AG04450 (cell line): ENCODE measurements at regions of chr7 and their contacts with region 1.

Region 1: GRCh38 chr7:44072364-44073231 is 7.2 kb upstream of the PGAM2 start:
- DNase-seq: peak; percentile 61
- H3K4me3 ChIP-seq: no peak overlapping the region
- H3K27ac ChIP-seq: peak overlapping the region; percentile 31
- H3K27me3 ChIP-seq: no peaks in the 10 kb centered on the region
- CTCF ChIP-seq: peak; percentile 95

Region 2: GRCh38 chr7:44131173-44132029 is 58.8 kb after region 1 on chr7:
- CTCF ChIA-PET with region 1: interaction called, 3 read pairs
- POLR2A ChIA-PET with region 1: interaction called, 10 read pairs
- DNase-seq: no peak
- H3K4me3 ChIP-seq: no peak overlapping the region
- H3K27ac ChIP-seq: no peak overlapping the region
- H3K27me3 ChIP-seq: peaks cover 2% of the 10 kb centered on the region
- CTCF ChIP-seq: peak; percentile 44

Region 3: GRCh38 chr7:45484094-45484493 is 1411.5 kb after region 1 on chr7:
- CTCF ChIA-PET with region 1: no interaction called
- POLR2A ChIA-PET with region 1: no interaction called
- DNase-seq: no peak
- H3K4me3 ChIP-seq: no peak overlapping the region
- H3K27ac ChIP-seq: no peak overlapping the region
- H3K27me3 ChIP-seq: peaks cover 3% of the 10 kb centered on the region
- CTCF ChIP-seq: no peak